Mammary epithelial cell (primary cell): ENCODE measurements at regions of chr11 and their contacts with region 1.

Region 1: GRCh38 chr11:61477727-61478148 is 30.8 kb upstream of the LRRC10B start:
- DNase-seq: no peak
- H3K4me3 ChIP-seq: no peak overlapping the region
- H3K27ac ChIP-seq: no peak overlapping the region
- H3K4me1 ChIP-seq: peaks cover 8% of the 10 kb centered on the region
- H3K27me3 ChIP-seq: no peaks in the 10 kb centered on the region
- CTCF ChIP-seq: peak; percentile 73 to 95

Region 2: DNA sequence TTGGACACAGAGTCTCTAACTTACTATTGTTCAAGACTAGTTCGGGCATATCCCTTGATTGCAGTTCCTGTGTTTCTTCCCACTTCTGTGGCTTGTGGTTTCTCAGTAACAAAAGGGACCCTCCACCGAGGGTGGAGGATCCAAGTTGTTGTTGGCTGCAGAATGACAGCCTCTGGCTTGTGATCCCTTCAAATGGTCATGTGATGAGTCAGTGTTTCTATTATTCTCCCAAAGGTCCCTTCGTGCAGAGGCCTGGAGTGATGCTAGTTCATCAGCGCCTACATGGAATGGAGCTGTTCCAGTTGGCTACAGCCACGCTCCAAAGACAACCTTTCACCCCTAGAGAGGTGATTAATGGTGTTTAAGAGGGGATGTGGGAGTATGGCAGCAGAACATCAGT is 180.0 kb before region 1 on chr11:
- CTCF ChIA-PET with region 1: no interaction called
- dilution Hi-C with region 1: no loop called
- in situ Hi-C with region 1: no loop called
- intact Hi-C with region 1: no loop called
- DNase-seq: peak; percentile 97
- H3K4me3 ChIP-seq: no peak overlapping the region
- H3K27ac ChIP-seq: peak overlapping the region; percentile 48
- H3K4me1 ChIP-seq: peaks cover 60% of the 10 kb centered on the region
- H3K27me3 ChIP-seq: peaks cover 2% of the 10 kb centered on the region
- CTCF ChIP-seq: no peak

Region 3: GRCh38 chr11:61446211-61446651 is 31.5 kb before region 1 on chr11:
- CTCF ChIA-PET with region 1: no interaction called
- dilution Hi-C with region 1: no loop called
- in situ Hi-C with region 1: no loop called
- intact Hi-C with region 1: loop called (anchors 2 kb)
- DNase-seq: peak; percentile 89
- H3K4me3 ChIP-seq: no peak overlapping the region
- H3K27ac ChIP-seq: no peak overlapping the region
- H3K4me1 ChIP-seq: peaks cover 3% of the 10 kb centered on the region
- H3K27me3 ChIP-seq: no peaks in the 10 kb centered on the region
- CTCF ChIP-seq: peak; percentile 95 to 96

Region 4: GRCh38 chr11:61532139-61533038 is 54.7 kb after region 1 on chr11:
- CTCF ChIA-PET with region 1: no interaction called
- dilution Hi-C with region 1: no loop called
- in situ Hi-C with region 1: no loop called
- intact Hi-C with region 1: loop called (anchors 5 kb)
- DNase-seq: peak; percentile 46
- H3K4me3 ChIP-seq: no peak overlapping the region
- H3K27ac ChIP-seq: no peak overlapping the region
- H3K4me1 ChIP-seq: no peaks in the 10 kb centered on the region
- H3K27me3 ChIP-seq: no peaks in the 10 kb centered on the region
- CTCF ChIP-seq: peak; percentile 83 to 84

Region 5: DNA sequence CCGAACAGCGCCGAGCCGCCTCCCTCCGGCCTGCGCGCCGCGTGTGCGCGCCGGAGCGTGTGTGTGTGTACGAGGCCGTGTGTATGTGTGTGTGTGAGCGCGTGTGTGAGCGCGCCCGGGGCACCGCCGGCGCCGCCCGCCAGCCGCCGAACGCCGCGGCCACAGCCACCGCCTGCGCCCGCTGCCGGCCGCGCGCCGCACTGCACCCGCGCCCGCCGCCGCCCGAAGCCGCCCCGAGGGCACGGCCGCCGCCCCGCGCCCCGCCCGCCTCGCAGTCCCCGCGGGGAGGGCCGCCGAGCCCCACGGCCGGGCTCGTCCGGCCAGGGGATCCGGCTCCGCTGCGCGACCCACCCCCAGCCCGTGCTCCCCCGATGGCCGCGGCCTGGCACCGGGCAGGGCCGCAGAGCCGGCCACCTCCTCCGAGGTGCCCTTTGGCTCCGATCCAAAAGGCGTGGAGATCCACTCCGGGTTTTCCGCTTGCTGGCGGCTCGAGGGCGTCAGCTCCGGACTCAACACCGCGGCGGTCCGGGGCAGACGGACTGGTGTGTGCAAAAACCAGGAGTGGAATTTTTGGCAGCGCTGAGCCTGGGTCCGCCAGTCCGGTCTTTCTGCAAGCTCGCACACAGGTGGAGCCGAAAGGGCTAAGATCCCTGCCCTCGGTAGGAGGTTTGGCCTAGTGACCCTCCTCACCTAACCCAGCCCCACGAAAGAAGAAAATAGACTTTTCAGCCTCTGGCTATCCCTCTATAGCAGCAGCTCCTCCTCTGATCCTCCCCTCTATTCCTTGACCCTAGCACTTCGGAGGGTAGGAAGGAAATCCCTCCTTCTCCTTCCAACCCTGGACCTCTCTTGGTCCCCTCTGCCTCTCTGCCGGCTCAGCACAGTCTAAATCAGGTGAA is 103.5 kb after region 1 on chr11 and contains the start of gene SYT7:
- CTCF ChIA-PET with region 1: no interaction called
- dilution Hi-C with region 1: no loop called
- in situ Hi-C with region 1: no loop called
- intact Hi-C with region 1: loop called (anchors 5 kb)
- DNase-seq: peak; percentile 96
- H3K4me3 ChIP-seq: peak within 1 kb of the TSS; percentile 55 to 80 (median 58)
- H3K27ac ChIP-seq: no peak within 1 kb of the TSS
- H3K4me1 ChIP-seq: peaks cover 8% of the 10 kb centered on the region
- H3K27me3 ChIP-seq: peaks cover 12% of the 10 kb centered on the region
- CTCF ChIP-seq: peak; percentile 5 to 21
- total RNA-seq, gene SYT7: 4.7 to 17.7 TPM

Region 6: GRCh38 chr11:61733120-61733978 is 255.6 kb after region 1 on chr11:
- CTCF ChIA-PET with region 1: no interaction called
- dilution Hi-C with region 1: no loop called
- in situ Hi-C with region 1: loop called in 1 of 2 experiments (anchors 25 kb)
- intact Hi-C with region 1: loop called (anchors 5 kb)
- DNase-seq: peak; percentile 70
- H3K4me3 ChIP-seq: no peak overlapping the region
- H3K27ac ChIP-seq: no peak overlapping the region
- H3K4me1 ChIP-seq: peaks cover 27% of the 10 kb centered on the region
- H3K27me3 ChIP-seq: no peaks in the 10 kb centered on the region
- CTCF ChIP-seq: peak; percentile 99 to 100